H1 (cell line): ENCODE measurements at regions of chr1 and their contacts with region 1.

Region 1: GRCh38 chr1:228515200-228515834 is 28.1 kb downstream of the RNF187 start:
- DNase-seq: no peak
- H3K4me3 ChIP-seq: no peak overlapping the region
- H3K27ac ChIP-seq: no peak overlapping the region
- H3K4me1 ChIP-seq: no peaks in the 10 kb centered on the region
- H3K27me3 ChIP-seq: peaks cover 0 to 48% (median 18%) of the 10 kb centered on the region in 4 experiments; a peak in 6 of 7 replicates
- CTCF ChIP-seq: peak in 2 of 3 experiments; percentile 59 to 87; a peak in 3 of 4 replicates
- EP300 ChIP-seq: no peak
- POLR2A ChIP-seq: no peak
- RAD21 ChIP-seq: peak; percentile 87 to 90

Region 2: DNA sequence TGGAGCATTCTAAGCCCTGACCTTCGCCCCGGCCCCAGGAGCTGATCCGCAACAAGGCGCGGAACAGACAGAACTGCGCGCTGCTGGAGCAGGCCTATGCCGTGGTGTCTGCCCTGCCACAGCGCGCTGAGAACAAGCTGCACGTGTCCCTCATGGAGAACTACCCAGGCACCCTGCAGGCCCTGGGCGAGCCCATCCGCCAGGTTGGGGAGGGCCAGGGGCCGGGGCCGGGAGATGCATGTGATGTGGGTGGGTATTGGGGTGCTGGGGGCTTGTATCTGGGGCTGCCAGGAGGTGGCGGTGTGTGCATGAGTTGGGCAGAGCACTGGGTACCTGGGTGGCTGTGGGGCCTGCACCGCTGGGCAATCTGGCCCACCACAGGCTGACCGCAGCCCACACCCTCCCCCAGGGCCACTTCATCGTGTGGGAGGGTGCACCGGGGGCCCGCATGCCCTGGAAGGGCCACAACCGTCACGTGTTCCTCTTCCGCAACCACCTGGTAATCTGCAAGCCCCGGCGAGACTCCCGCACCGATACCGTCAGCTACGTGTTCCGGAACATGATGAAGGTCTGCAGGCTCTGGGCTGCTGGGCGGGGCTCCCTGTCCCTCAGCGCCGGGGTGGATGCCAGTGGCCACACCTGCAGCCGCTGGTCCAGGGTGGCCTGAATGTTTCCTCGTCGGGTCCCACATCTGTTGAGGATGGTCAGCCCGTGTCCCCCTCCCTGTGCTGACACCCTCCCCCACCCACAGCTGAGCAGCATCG is 174.4 kb before region 1 on chr1:
- CTCF ChIA-PET with region 1: interaction called, 15 read pairs
- POLR2A ChIA-PET with region 1: no interaction called
- DNase-seq: peak; percentile 23 to 82
- H3K4me3 ChIP-seq: no peak overlapping the region
- H3K27ac ChIP-seq: no peak overlapping the region
- H3K4me1 ChIP-seq: no peaks in the 10 kb centered on the region; a peak in 1 of 7 replicates
- H3K27me3 ChIP-seq: 0 out of 7 replicates have a peak, but pooled peaks cover 0 to 2% (median 0%) of the 10 kb centered on the region in 4 experiments
- CTCF ChIP-seq: peak in 2 of 3 experiments; percentile 62 to 76; a peak in 3 of 4 replicates
- EP300 ChIP-seq: no peak
- POLR2A ChIP-seq: no peak
- RAD21 ChIP-seq: peak; percentile 75 to 80

Region 3: GRCh38 chr1:228374711-228375577 is 140.4 kb before region 1 on chr1:
- CTCF ChIA-PET with region 1: interaction called, 10 read pairs
- POLR2A ChIA-PET with region 1: no interaction called
- DNase-seq: no peak
- H3K4me3 ChIP-seq: no peak overlapping the region
- H3K27ac ChIP-seq: no peak overlapping the region
- H3K4me1 ChIP-seq: peaks cover 0 to 10% (median 5%) of the 10 kb centered on the region in 4 experiments; a peak in 5 of 7 replicates
- H3K27me3 ChIP-seq: peaks cover 2 to 17% (median 11%) of the 10 kb centered on the region in 4 experiments; a peak in 6 of 7 replicates
- CTCF ChIP-seq: no peak
- EP300 ChIP-seq: no peak
- POLR2A ChIP-seq: no peak
- RAD21 ChIP-seq: no peak

Region 4: DNA sequence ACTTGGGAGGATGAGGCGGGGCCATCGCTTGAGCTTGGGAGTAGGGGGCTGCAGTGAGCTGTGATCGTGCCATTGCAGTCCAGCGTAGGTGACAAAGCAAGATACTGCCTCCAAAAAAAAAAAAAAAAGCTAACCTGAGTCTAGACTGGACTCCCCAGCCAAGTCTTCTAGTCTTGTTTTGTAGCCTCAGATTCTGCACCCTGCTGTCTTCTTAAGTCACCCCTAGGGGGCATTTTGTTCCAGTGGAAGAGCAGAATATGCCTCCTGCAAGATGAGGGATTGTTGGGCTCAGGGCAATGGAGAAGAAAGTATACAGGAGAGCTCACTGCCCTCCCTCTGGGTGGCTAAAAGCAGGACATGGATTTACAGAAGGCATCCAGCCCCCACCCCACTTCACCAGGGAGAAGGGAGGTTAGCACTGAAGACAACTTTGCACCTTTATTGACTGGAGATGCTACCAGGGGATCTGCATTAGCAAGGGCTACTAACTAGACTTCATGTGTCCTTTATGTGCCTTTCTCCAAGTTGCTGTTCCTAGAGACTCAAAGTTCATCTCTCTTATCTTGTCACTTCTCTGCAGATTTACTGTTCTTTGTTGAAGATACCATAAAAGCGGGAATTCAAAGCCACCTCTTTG is 43.4 kb before region 1 on chr1:
- CTCF ChIA-PET with region 1: interaction called, 19 read pairs
- POLR2A ChIA-PET with region 1: interaction called, 3 read pairs
- DNase-seq: no peak
- H3K4me3 ChIP-seq: no peak overlapping the region
- H3K27ac ChIP-seq: no peak overlapping the region
- H3K4me1 ChIP-seq: peaks cover 3 to 22% (median 15%) of the 10 kb centered on the region in 4 experiments; a peak in 6 of 7 replicates
- H3K27me3 ChIP-seq: peaks cover 2 to 28% (median 15%) of the 10 kb centered on the region in 4 experiments
- CTCF ChIP-seq: peak in 2 of 3 experiments; percentile 64 to 68; a peak in 3 of 4 replicates
- EP300 ChIP-seq: no peak
- POLR2A ChIP-seq: no peak
- RAD21 ChIP-seq: peak; percentile 50 to 70

Region 5: GRCh38 chr1:228500901-228501871 is 14.1 kb before region 1 on chr1:
- CTCF ChIA-PET with region 1: interaction called, 66 read pairs
- POLR2A ChIA-PET with region 1: interaction called, 3 read pairs
- DNase-seq: peak; percentile 61 to 92
- H3K4me3 ChIP-seq: peak overlapping the region in 1 of 4 experiments; percentile 17; a peak in 1 of 8 replicates
- H3K27ac ChIP-seq: no peak overlapping the region
- H3K4me1 ChIP-seq: peaks cover 0 to 4% (median 2%) of the 10 kb centered on the region in 4 experiments; a peak in 4 of 7 replicates
- H3K27me3 ChIP-seq: peaks cover 0 to 24% (median 18%) of the 10 kb centered on the region in 4 experiments; a peak in 6 of 7 replicates
- CTCF ChIP-seq: peak; percentile 84 to 95 (median 89)
- EP300 ChIP-seq: no peak
- POLR2A ChIP-seq: no peak
- RAD21 ChIP-seq: peak; percentile 82

Region 6: DNA sequence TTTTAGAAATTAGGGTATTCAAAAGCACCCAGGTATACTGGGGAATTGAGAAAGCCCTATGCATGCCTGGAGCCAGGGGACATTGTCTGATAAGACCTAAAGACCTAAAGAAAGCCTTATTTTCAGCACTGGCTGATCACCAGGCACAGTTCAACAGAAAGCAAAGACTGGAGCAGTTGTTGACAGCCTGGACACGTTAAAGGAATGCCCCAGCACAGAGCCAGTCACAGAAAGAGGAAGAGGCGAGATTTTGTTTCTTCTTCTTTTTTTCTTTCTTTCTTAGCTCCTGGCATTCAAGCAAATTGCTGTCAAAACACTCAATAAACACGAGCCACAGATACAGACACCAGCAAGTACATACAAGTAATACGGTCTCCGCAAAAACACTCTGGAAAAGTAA is 12.3 kb after region 1 on chr1:
- CTCF ChIA-PET with region 1: no interaction called
- POLR2A ChIA-PET with region 1: no interaction called
- DNase-seq: no peak
- H3K4me3 ChIP-seq: no peak overlapping the region
- H3K27ac ChIP-seq: no peak overlapping the region
- H3K4me1 ChIP-seq: no peaks in the 10 kb centered on the region
- H3K27me3 ChIP-seq: peaks cover 12 to 34% (median 20%) of the 10 kb centered on the region in 4 experiments
- CTCF ChIP-seq: no peak
- EP300 ChIP-seq: no peak
- POLR2A ChIP-seq: no peak
- RAD21 ChIP-seq: no peak